Activated CD4-positive, alpha-beta T cell treated with anti-CD3 and anti-CD28 coated beads for 36 hours (primary cell): ENCODE measurements at regions of chr1 and their contacts with region 1.

Region 1: DNA sequence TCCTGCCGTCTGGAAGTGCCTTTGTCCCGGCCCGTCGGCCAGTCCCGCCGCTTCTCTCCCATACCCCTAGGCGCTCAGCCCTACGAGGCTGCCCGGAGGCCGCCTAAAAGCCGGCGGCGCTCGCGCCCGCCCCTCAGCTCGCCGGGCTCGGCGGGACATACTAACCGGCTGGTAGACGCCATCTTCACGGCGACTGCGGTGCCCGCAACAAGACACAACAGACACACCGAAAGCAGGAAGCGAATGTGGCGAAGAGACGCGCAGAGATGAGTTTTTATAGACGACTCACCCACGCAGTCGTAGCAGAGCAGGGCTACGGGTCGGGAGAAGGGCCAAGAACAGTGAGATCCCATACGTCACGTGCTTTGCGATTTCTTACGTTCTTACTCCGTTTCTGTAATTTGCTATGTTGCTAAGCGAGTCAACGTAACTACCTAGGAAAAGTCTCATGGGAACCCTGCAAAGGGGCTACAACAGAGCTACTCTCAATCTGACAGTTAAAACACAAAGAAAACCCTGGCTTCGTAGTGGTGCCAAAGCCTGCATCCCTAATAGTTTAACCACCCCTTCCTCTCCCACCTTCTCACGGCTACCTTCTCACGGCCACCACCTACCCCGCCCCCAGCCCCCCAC is at the start of gene GTF2B:
- DNase-seq: peak; percentile 96
- ATAC-seq: peak; percentile 87
- H3K4me3 Mint-ChIP-seq: peak within 1 kb of the TSS; percentile 88
- H3K27ac Mint-ChIP-seq: peak within 1 kb of the TSS; percentile 96
- H3K4me1 Mint-ChIP-seq: peaks cover 34% of the 10 kb centered on the region
- H3K27me3 Mint-ChIP-seq: no peaks in the 10 kb centered on the region
- total RNA-seq, gene GTF2B: 34.3 to 38.1 TPM

Region 2: DNA sequence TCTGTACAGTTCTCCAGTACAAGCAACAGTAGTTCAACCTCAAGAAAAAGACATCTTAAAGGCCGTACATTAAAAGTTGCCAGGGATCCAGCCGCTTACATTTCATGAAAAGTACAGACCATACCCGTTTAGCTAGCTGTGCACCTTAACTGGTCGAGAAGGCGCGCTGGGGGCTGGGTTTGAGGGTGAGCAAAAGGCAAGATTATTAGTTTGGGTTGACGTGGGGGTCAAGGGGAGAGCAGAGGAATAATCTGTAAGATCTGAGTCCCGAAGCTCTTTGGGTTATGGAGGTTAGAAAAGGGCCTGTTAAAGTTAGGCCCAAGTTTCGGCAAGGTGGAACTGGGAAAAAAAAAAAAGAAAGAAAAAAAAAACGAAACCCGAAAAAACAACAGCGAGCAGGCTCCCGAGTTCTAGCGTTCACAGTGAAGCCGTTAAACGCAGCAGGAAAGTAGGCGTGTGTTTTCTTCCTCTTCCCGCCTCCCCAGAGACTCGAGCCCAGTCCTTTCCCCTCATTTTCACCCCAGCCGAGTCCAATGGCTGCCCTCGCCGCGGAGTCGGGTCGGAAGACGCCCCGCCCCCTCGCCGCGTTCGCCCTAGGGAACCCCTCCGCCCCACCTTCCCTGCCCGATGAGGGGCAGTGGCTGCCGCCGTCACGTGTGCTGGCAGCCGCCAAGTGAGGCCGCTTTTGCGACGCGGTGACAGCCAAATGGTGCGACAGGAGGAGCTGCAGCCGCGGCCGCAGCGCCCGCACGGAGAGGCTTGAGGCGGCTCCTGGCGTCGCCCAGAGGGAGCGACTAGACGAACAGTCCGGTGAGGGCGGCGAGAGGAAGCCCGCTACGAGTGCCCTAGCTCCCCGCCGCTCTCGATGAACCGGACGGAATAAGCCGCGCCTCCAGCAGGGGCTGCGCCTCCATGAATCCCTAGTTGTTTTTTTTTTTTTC is 207.6 kb before region 1 on chr1 and contains the start of gene PKN2:
- CTCF ChIA-PET with region 1: interaction called, 5 read pairs
- POLR2A ChIA-PET with region 1: interaction called, 7 read pairs
- intact Hi-C with region 1: loop called (anchors 1 kb)
- DNase-seq: peak; percentile 99
- ATAC-seq: peak; percentile 96
- H3K4me3 Mint-ChIP-seq: peak within 1 kb of the TSS; percentile 94
- H3K27ac Mint-ChIP-seq: peak within 1 kb of the TSS; percentile 99
- H3K4me1 Mint-ChIP-seq: peaks cover 21% of the 10 kb centered on the region
- H3K27me3 Mint-ChIP-seq: no peaks in the 10 kb centered on the region
- total RNA-seq, gene PKN2: 16.4 to 24.9 TPM

Region 3: DNA sequence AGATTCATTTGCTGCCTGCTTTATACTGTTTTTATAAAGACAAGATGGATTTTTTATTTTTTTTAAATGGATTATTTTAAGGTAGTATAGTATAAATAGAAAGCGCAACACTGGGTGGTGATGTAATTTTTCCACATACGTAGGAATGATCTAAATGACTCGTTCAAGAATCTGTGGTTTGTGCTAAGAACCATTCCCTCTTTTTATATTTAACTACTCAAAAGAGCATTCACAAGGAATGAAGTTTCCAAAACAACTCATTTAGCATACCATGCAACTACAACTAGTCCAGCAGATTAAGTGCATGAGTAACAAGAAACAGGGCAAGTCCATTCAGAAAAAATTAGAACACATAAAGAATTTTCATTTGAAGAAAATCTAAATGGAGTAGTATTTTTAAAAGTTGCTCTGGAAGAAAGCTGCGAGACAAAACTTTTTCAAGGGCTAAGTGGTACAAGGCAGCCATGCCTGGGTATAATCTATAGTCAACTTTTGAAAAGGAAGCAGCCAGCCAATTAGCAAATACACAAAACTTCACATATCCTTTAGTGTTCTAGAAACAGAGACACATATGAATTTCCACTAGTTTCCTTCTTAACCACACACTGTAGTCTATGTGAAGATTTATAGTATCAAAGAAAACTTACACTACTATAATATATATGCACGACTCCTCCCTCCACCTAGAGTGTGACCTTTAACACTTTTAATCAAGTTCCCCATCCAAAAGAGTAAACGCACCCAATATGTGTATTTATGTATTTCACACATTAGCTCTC is 23.5 kb before region 1 on chr1:
- CTCF ChIA-PET with region 1: interaction called, 3 read pairs
- POLR2A ChIA-PET with region 1: no interaction called
- intact Hi-C with region 1: loop called in 1 of 2 experiments (anchors 2 kb)
- DNase-seq: no peak
- ATAC-seq: peak; percentile 77
- H3K4me3 Mint-ChIP-seq: peak overlapping the region; percentile 33
- H3K27ac Mint-ChIP-seq: peak overlapping the region; percentile 92
- H3K4me1 Mint-ChIP-seq: peaks cover 59% of the 10 kb centered on the region
- H3K27me3 Mint-ChIP-seq: no peaks in the 10 kb centered on the region

Region 4: GRCh38 chr1:88990426-88990825 is 99.0 kb after region 1 on chr1:
- CTCF ChIA-PET with region 1: no interaction called
- POLR2A ChIA-PET with region 1: interaction called, 3 read pairs
- intact Hi-C with region 1: loop called in 1 of 2 experiments (anchors 1 kb)
- DNase-seq: no peak
- ATAC-seq: no peak
- H3K4me3 Mint-ChIP-seq: peak overlapping the region; percentile 41
- H3K27ac Mint-ChIP-seq: peak overlapping the region; percentile 48
- H3K4me1 Mint-ChIP-seq: peaks cover 50% of the 10 kb centered on the region
- H3K27me3 Mint-ChIP-seq: no peaks in the 10 kb centered on the region

Region 5: DNA sequence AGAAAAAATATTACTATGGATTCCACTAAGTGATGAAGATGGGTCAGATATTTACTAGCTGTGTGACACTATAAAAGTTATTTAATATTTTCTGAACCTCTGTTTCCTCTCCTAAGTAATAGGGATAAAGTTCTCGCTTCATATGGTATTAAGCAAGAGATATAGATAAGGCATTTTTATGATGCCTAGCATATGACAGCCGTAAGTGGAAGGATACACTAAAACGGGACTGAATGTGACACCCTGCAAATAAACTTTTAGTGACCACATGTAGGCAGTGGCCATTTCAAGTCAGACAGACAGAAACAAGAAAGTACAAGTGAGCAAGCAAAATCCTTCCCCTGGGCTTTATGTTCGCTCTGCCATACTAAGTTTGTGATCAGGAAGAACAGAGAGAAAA is 117.1 kb after region 1 on chr1:
- CTCF ChIA-PET with region 1: no interaction called
- POLR2A ChIA-PET with region 1: no interaction called
- intact Hi-C with region 1: no loop called
- DNase-seq: no peak
- ATAC-seq: no peak
- H3K4me3 Mint-ChIP-seq: no peak overlapping the region
- H3K27ac Mint-ChIP-seq: no peak overlapping the region
- H3K4me1 Mint-ChIP-seq: peaks cover 7% of the 10 kb centered on the region
- H3K27me3 Mint-ChIP-seq: no peaks in the 10 kb centered on the region

Region 6: DNA sequence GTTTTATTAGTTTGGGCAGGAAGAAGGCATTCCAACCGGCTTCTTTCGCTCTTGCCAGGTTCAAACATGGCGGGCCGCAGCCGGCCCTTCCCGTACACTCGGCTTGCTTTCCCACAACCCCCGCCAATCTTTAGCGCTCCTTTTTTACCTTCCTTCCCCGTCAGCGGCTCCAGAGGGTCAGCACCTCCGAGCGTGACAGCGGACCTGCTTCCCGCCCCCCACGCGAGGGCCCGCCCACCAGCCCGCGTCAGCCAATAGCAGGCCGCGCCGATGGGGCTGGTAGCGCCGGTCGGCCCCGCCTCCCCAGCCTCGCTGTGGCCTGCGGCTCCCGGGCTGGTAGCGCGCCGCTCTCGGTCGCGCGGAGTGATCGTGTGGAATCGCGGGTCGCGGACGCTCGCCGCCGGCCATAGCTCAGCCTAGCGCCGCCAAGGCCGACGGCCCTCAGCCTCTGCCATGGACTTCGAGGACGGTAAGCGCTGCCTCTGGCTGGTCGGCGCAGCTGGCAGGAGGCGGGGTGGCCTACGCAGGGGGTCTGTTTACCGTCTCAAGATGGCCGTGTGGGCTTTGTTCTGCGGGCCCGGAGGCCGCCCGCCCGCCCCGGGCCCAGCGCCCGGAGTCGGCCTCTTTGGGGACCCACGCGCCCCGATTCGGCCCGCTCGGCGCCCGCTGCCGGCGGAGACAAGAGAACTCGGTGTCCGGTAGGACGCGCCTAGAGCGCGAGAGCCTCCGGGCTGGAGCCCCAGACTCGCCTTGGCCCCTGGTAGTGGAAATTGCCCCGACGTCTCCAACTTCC is 1103.6 kb after region 1 on chr1 and contains the start of gene ZNF326:
- CTCF ChIA-PET with region 1: no interaction called
- POLR2A ChIA-PET with region 1: no interaction called
- intact Hi-C with region 1: loop called in 1 of 2 experiments (anchors 5 kb)
- DNase-seq: peak; percentile 97
- ATAC-seq: peak; percentile 95
- H3K4me3 Mint-ChIP-seq: peak within 1 kb of the TSS; percentile 94
- H3K27ac Mint-ChIP-seq: peak within 1 kb of the TSS; percentile 92
- H3K4me1 Mint-ChIP-seq: peaks cover 42% of the 10 kb centered on the region
- H3K27me3 Mint-ChIP-seq: no peaks in the 10 kb centered on the region
- total RNA-seq, gene ZNF326: 19.4 to 20.5 TPM